Activated T-helper 2 cell treated with anti-CD3 and anti-CD28 coated beads, Interferon-gamma antibody, Interleukin-2, Interleukin-4, amounts not matched to agents 10 μg/mL and 5 μg/mL and 100 μg/mL, durations not matched to agents 14 hours and 24 hours and 36 hours (primary cell): ENCODE measurements at regions of chr17 and their contacts with region 1.

Region 1: DNA sequence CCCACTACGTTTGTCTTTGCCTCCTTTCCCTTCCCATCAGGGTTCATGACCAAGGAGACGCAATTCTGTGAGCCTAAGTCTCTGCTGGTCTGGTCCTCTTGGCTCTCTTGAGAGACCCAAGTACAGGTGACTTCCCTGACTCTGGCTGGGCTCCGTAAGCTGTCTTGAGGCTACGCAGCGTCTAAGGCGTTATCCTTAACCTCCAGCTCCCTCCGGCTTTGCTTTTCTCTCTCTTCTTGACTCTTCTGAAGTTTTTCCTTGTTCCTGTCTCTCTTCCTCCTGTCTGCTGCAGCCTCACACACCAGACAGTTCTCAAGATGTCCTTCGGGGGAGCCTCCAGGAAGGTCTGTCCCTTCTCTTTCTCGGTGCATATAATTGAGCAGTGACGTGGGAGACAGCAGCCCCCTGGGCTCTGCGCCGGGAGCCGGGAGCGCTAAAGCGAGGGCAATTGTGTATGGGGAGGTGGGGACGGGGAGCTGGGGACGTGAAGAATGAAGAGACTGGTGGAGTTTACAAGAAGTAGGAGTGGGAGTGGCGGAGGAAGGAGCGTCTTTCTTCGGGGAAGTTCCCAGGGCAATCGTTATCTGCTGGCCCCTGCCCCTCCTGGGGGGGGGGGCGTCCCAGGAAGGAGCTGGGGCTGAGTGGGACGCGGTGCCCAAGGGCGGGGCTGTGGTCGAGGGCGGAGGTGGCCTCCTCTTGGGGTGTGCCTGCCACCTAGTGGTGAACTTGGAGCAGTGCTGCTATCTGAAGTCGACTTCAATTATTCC is 6.9 kb upstream of the PIRT start:
- DNase-seq: peak; percentile 54
- H3K4me3 Mint-ChIP-seq: peak overlapping the region; percentile 73
- H3K27ac Mint-ChIP-seq: no peak overlapping the region
- H3K4me1 Mint-ChIP-seq: peaks cover 12% of the 10 kb centered on the region
- H3K27me3 Mint-ChIP-seq: peaks cover 4% of the 10 kb centered on the region

Region 2: DNA sequence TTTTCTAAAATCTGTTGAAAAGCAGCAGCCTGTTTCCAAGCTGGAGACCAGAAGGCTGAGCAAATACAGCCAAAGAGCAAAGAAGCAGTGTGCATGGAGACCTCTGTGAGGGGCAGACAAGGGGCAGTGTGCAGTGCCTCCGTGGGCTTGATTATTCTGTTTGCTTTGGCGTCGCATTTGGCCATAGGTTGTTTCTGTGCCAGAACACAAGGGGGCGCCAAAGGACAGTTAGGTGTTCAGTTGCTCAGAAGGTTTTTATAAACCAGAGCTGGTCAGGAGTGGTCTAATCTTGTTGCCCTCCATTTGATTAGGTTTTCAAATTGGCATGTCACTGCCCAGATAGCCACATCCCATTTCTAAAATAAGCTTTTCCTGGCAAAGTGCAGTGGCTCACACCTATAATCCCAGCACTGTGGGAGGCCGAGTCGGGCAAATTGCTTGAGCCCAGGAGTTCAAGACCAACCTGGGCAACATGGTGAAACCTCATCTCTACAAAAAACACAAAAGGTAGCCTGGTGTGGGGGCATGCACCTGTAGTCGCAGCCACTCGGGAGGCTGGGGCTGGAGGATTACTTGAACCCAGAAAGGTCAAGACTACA is 198.3 kb before region 1 on chr17:
- intact Hi-C with region 1: loop called (anchors 1 kb)
- DNase-seq: peak; percentile 58
- H3K4me3 Mint-ChIP-seq: no peak overlapping the region
- H3K27ac Mint-ChIP-seq: no peak overlapping the region
- H3K4me1 Mint-ChIP-seq: no peaks in the 10 kb centered on the region
- H3K27me3 Mint-ChIP-seq: no peaks in the 10 kb centered on the region

Region 3: GRCh38 chr17:10737168-10737622 is 107.6 kb before region 1 on chr17:
- intact Hi-C with region 1: loop called (anchors 1 kb)
- DNase-seq: no peak
- H3K4me3 Mint-ChIP-seq: no peak overlapping the region
- H3K27ac Mint-ChIP-seq: no peak overlapping the region
- H3K4me1 Mint-ChIP-seq: peaks cover 2% of the 10 kb centered on the region
- H3K27me3 Mint-ChIP-seq: peaks cover 23% of the 10 kb centered on the region

Region 4: GRCh38 chr17:10754109-10754508 is 90.7 kb before region 1 on chr17:
- intact Hi-C with region 1: loop called (anchors 5 kb)
- DNase-seq: no peak
- H3K4me3 Mint-ChIP-seq: no peak overlapping the region
- H3K27ac Mint-ChIP-seq: no peak overlapping the region
- H3K4me1 Mint-ChIP-seq: no peaks in the 10 kb centered on the region
- H3K27me3 Mint-ChIP-seq: no peaks in the 10 kb centered on the region

Region 5: DNA sequence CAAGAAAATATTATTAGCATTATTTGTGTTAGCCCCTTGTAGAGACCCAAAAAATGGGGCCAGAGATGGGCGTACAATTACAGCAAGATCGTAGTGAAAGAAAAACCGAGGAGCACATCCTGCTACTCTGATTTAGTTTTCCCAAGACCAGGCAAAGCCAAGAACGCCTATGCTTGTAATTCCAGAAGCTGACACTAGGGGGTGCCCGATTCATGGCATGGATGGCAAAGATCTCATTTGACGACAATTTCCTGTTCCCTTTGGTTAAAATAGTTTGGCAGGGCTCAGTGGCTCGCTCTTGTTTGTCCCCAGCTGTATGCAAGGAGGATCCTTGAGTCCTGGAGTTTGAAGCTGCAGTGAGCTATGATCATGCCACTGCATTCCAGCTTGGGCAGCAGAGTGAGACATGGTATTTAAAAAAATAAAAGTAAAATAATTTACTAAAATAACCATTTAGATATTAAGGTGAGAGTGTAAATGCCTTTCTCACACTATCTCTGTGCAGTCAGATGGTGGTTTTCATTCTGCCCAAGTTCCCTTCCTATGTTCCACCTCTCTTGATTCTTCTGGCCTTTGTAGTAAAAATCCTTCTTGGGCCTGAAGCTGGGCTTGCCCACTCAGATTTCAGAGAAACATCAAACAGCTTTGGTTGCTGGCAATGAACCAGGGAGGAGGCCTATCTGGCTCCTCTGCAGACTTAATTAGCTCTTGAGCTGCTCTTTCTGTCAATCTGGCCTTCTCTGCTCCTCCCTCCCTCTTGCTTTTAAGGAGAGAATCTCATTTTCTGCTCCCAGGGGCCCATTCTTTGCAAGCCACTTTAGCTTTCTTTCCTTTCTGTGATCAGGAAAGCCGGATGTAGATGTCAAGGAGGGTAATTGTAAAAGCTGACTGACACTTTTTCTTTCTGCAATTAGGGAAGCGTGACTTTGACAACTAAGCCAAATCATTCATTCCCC is 72.1 kb before region 1 on chr17:
- intact Hi-C with region 1: loop called (anchors 1 kb)
- DNase-seq: no peak
- H3K4me3 Mint-ChIP-seq: no peak overlapping the region
- H3K27ac Mint-ChIP-seq: no peak overlapping the region
- H3K4me1 Mint-ChIP-seq: no peaks in the 10 kb centered on the region
- H3K27me3 Mint-ChIP-seq: no peaks in the 10 kb centered on the region

Region 6: GRCh38 chr17:10815378-10815777 is 29.4 kb before region 1 on chr17:
- intact Hi-C with region 1: no loop called
- DNase-seq: no peak
- H3K4me3 Mint-ChIP-seq: no peak overlapping the region
- H3K27ac Mint-ChIP-seq: no peak overlapping the region
- H3K4me1 Mint-ChIP-seq: no peaks in the 10 kb centered on the region
- H3K27me3 Mint-ChIP-seq: no peaks in the 10 kb centered on the region